ENCODE measurements at regions of chr7 and their contacts with region 1.

Region 1: GRCh38 chr7:100563809-100564400 is 9.8 kb downstream of the SAP25 start:
- DNase-seq: peak; percentile 78 to 88 (median 81)
- ATAC-seq: peak; percentile 37 to 70 (median 63)
- H3K4me3 ChIP-seq: no peak overlapping the region
- H3K27ac ChIP-seq: no peak overlapping the region
- H3K4me1 ChIP-seq: peaks cover 0 to 13% (median 3%) of the 10 kb centered on the region in 12 donors
- H3K27me3 ChIP-seq: no peaks in the 10 kb centered on the region
- CTCF ChIP-seq: peak; percentile 89 to 96 (median 94)
- POLR2A ChIP-seq: no peak

Region 2: DNA sequence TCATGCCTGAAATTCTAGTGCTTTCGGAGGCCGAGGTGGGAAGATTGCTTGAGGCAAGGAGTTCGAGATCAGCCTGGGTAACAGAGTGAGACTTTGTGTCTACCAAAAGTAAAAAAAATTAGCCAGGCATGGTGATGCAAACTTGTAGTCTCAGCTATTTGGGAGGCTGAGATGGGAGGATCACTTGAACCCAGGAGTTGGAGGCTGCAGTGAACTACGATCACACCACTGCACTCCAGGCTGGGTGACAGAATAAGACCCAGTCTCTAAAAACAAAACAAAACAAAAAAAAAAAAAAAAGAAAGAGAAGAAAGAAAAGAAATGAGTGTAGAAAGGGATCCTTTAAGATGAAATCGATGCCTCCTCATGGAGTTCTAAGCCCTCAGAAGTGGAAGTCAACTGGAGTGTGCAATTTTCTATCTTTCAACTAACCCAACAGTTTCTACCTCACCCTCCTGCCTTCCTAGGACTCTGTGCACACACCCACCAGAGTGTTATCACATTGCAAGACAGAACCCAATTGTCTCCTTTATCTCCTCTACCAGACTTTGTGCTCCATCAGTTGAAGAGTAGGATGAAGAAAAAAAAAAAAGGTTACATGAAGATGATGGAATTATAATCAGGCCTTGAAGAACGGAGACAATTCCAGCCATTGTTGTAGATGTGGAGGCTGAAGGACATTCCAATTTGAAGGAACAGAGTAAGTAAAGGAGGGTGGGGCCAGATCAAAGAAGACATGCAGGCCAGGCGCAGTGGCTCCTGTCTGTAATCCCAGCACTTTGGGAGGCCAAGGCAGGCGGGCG is 53.3 kb before region 1 on chr7:
- intact Hi-C with region 1: loop called in 1 of 10 experiments (anchors 5 kb)
- DNase-seq: peak in 1 of 5 donors; percentile 9
- ATAC-seq: no peak
- H3K4me3 ChIP-seq: no peak overlapping the region
- H3K27ac ChIP-seq: no peak overlapping the region
- H3K4me1 ChIP-seq: peaks cover 0 to 10% (median 0%) of the 10 kb centered on the region in 12 donors
- H3K27me3 ChIP-seq: peaks cover 0 to 4% (median 0%) of the 10 kb centered on the region in 9 donors
- CTCF ChIP-seq: no peak
- POLR2A ChIP-seq: no peak

Region 3: DNA sequence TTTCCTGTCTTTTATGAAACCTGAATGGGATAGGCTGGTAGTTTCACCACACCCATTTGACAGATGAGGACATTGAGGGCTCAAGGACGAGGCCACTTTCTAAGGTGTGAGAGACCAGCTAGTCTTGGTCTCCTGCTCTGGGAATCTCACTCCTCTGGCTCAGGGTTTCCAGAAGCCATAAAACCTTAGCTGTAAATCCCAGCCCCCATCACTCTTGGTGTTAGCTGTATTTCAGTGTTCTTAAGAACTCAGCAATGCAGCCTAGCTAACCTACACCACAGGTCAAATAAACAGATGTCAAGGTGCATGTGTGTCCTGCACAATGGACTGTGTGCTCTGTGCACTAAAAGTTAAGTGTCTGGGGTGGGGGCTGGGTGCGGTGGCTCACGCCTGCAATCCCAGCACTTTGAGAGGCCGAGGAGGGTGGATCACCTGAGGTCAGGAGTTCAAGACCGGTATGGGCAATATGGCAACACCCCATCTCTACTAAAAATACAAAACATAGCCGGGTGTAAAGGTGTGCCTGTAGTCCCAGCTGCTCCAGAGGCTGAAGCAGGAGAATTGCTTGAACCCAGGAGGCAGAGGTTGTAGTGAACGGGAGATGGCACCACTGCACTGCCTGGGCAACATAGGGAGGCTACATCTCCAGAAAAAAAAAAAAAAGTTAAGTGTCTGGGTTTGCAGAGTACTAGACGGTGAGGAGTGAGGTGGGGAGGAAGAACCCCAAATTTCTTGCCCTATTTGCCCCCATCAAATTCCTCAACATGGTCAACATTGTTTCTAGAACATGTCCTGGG is 155.8 kb after region 1 on chr7:
- intact Hi-C with region 1: loop called in 1 of 10 experiments (anchors 10 kb)
- DNase-seq: peak in 1 of 5 donors; percentile 4
- ATAC-seq: no peak
- H3K4me3 ChIP-seq: no peak overlapping the region
- H3K27ac ChIP-seq: no peak overlapping the region
- H3K4me1 ChIP-seq: peaks cover 0 to 11% (median 0%) of the 10 kb centered on the region in 12 donors
- H3K27me3 ChIP-seq: peaks cover 11 to 50% (median 34%) of the 10 kb centered on the region in 9 donors
- CTCF ChIP-seq: no peak
- POLR2A ChIP-seq: no peak

Region 4: DNA sequence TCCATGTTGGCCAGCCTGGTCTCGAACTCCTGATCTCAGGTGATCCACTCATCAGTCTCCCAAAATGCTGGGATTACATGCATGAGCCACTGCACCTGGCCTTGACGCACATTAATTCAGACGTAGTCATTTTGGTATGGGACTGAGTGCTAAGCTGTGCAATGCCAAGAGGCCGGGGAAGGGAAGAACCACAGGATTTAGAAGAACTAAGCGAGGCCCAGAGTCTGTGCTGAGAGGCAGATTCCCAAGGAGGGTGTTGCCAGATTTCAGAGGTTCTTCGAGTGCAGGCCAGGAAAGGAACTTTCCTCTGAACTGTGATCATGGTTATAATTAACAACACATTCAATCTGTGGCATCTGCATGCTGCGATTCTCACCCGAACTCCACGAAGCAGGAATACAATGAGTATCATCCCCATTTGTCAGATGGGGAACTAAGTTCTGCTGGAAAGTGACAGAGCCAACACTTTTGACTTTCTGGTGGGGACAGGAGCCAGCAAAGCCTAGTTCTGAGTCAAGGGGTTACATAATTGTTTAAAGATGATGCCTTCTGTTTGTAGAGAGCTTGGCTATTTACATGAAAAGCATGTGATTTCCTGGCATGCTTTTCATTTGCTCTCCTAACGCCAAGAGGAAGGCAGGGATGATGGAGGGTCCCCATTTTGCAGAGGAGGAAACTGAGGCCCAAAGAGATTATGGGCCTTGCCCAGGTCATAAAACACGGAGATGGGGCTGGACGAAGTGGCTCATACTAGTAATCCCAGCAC is 163.3 kb after region 1 on chr7:
- intact Hi-C with region 1: loop called in 2 of 10 experiments (anchors 5 to 10 kb)
- DNase-seq: peak in 1 of 5 donors; percentile 3
- ATAC-seq: no peak
- H3K4me3 ChIP-seq: no peak overlapping the region
- H3K27ac ChIP-seq: no peak overlapping the region
- H3K4me1 ChIP-seq: peaks cover 0 to 3% (median 0%) of the 10 kb centered on the region in 12 donors
- H3K27me3 ChIP-seq: peaks cover 0 to 37% (median 9%) of the 10 kb centered on the region in 9 donors
- CTCF ChIP-seq: no peak
- POLR2A ChIP-seq: no peak